A673 (cell line): ENCODE measurements at regions of chr18 and their contacts with region 1.

Region 1: DNA sequence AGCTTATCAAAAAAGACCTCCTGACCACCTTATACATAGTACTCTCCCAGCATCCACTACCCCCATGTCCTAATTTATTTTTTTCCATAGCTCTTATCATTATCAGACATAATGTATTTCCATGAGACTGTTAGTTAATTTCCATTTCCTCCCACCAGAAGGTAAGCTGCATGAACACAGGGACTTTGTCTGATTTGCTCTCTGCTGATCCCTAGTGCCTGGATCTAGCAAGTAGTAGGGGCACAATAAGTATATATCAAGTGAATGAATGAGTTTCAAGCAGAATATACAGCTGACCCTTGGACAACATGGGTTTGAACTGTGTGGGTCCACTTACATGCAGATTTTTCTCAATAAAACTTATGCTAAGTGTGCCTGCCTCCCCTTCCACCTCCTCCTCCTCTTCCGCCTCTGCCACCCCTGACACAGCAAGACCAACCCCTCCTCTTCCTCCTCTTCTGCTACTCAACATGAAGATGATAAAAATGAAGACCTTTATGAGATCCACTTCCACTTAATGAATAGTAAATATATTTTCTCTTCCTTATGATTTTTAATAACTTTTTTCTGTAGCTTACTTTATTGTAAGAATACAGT is 53.8 kb downstream of the CTAGE1 start:
- DNase-seq: no peak
- H3K4me3 ChIP-seq: no peak overlapping the region
- H3K27ac ChIP-seq: no peak overlapping the region
- H3K4me1 ChIP-seq: no peaks in the 10 kb centered on the region
- H3K27me3 ChIP-seq: peaks cover 82% of the 10 kb centered on the region
- CTCF ChIP-seq: no peak

Region 2: GRCh38 chr18:21991081-21991581 is 372.8 kb before region 1 on chr18:
- CTCF ChIA-PET with region 1: no interaction called
- POLR2A ChIA-PET with region 1: no interaction called
- intact Hi-C with region 1: no loop called
- DNase-seq: no peak
- H3K4me3 ChIP-seq: no peak overlapping the region
- H3K27ac ChIP-seq: no peak overlapping the region
- H3K4me1 ChIP-seq: no peaks in the 10 kb centered on the region
- H3K27me3 ChIP-seq: no peaks in the 10 kb centered on the region
- CTCF ChIP-seq: no peak

Region 3: GRCh38 chr18:22417496-22418188 is 53.7 kb after region 1 on chr18 and contains the start of gene CTAGE1:
- CTCF ChIA-PET with region 1: no interaction called
- POLR2A ChIA-PET with region 1: no interaction called
- intact Hi-C with region 1: loop called (anchors 2 kb)
- DNase-seq: no peak
- H3K4me3 ChIP-seq: no peak within 1 kb of the TSS
- H3K27ac ChIP-seq: no peak within 1 kb of the TSS
- H3K4me1 ChIP-seq: no peaks in the 10 kb centered on the region
- H3K27me3 ChIP-seq: peaks cover 62% of the 10 kb centered on the region
- CTCF ChIP-seq: no peak
- total RNA-seq, gene CTAGE1: not detected in 2 replicates

Region 4: DNA sequence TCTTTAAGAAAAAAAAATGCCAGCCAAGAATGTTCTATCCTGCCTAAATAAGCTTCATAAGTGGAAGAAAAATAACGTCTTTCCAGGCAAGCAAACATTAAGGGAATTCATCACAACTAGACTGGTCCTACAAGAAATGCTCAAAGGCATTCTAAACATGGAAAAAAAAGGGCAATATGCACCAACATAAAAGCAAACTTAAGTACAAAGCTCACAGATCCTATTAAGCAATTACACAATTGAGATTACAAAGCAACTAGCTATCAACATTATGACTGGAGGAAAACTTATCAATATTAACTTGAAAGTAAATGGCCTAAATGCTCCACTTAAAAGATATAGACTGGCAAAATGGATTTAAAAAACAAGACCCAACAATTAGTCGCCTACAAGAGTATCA is 294.4 kb after region 1 on chr18:
- CTCF ChIA-PET with region 1: no interaction called
- POLR2A ChIA-PET with region 1: no interaction called
- intact Hi-C with region 1: no loop called
- DNase-seq: no peak
- H3K4me3 ChIP-seq: no peak overlapping the region
- H3K27ac ChIP-seq: no peak overlapping the region
- H3K4me1 ChIP-seq: no peaks in the 10 kb centered on the region
- H3K27me3 ChIP-seq: no peaks in the 10 kb centered on the region
- CTCF ChIP-seq: no peak